CD14-positive monocyte (primary cell): ENCODE measurements at regions of chr6 and their contacts with region 1.

Region 1: DNA sequence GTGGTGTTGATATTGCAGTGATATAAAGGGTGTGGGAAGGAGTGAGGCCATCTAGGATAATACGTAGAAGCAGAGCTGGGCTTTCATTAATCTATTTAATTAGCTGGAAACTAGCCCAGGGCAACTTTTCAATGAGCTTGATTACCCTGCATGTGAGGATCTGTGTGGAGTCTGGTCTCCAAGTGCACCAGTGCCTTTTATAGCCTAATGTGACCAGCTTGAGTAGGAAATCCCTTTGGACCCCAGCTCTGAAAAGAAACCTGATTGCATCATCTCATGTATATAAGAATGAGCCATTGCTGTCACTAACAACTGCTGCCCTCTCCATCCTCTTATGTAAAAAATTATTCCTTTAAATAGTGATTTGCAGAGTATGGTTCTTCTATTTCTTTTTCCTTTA is 72.6 kb downstream of the CD109 start:
- DNase-seq: no peak
- H3K4me3 ChIP-seq: no peak overlapping the region
- H3K4me3 Mint-ChIP-seq: no peak overlapping the region
- H3K27ac ChIP-seq: no peak overlapping the region
- H3K27ac Mint-ChIP-seq: no peak overlapping the region
- H3K4me1 ChIP-seq: no peaks in the 10 kb centered on the region
- H3K4me1 Mint-ChIP-seq: no peaks in the 10 kb centered on the region
- H3K27me3 ChIP-seq: no peaks in the 10 kb centered on the region
- H3K27me3 Mint-ChIP-seq: no peaks in the 10 kb centered on the region
- CTCF ChIP-seq: no peak

Region 2: DNA sequence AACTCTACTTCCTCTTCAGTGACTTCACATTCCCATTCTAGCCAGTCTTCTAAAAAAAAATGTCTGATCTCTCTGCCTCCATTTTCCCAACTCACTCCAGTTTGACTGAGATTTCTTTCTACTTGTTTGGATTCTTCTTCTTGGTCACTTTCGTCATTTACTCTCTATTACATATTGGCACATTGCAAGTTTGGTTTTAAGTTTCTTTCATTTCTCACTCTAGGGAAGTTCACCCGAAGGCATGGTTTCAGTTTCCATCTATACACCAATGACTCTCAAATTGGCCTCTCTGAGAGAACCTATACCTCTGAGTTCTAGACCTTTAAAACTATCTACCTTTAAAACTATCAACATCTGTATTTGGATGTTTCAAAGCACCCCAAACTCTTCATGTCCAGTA is 21.3 kb before region 1 on chr6:
- intact Hi-C with region 1: loop called in 1 of 2 experiments (anchors 2 kb)
- DNase-seq: peak; percentile 65 to 73 (median 67)
- H3K4me3 ChIP-seq: peak overlapping the region; percentile 24 to 72 (median 63)
- H3K4me3 Mint-ChIP-seq: no peak overlapping the region
- H3K27ac ChIP-seq: peak overlapping the region in 1 of 2 donors; percentile 87
- H3K27ac Mint-ChIP-seq: no peak overlapping the region
- H3K4me1 ChIP-seq: peaks cover 18 to 31% of the 10 kb centered on the region in 2 donors
- H3K4me1 Mint-ChIP-seq: peaks cover 8% of the 10 kb centered on the region
- H3K27me3 ChIP-seq: no peaks in the 10 kb centered on the region
- H3K27me3 Mint-ChIP-seq: peaks cover 0 to 1% (median 0%) of the 10 kb centered on the region in 3 donors
- CTCF ChIP-seq: no peak